Activated CD4-positive, alpha-beta T cell treated with anti-CD3 and anti-CD28 coated beads for 36 hours (primary cell): ENCODE measurements at regions of chr21 and their contacts with region 1.

Region 1: DNA sequence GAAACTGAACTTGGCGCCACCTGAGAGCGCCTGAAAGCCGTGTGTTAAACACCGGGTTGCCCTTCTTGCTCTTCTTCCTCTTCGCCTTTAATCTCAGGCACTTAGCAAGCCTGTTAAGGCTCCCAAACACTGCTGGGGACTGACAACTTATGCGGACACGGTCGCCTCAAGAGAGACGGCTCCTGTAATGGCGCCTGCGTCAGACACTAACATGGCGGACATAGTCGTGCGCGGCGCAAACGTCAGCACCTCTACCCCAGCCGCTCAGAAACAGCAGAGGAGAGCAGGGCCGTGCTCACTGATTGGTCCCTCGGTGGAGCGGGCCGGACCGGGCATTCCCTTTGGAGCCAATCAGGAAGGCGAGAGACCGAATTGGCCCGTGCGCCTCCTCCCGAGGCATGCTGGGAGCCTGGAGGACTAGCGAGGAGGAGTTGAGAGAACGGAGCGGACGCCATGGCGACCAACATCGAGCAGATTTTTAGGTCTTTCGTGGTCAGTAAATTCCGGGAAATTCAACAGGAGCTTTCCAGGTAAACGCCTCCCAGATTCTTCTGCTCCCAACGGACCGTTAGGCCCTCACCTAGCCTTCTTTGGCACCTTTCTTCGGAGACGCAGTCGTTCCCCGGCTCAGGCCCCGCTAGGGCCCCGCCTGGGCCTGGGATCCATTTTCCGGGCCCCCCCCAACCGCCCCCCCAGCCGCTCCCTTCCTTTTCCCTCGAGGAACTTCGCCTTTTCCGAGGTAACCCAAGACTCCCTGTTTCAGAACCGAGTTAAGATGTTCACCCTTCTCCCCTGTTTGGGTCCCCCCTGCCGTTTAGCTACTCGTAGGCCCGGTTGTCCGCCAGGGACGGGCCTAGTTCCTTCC is at the start of gene SON:
- DNase-seq: peak; percentile 99
- ATAC-seq: peak; percentile 94
- H3K4me3 Mint-ChIP-seq: peak within 1 kb of the TSS; percentile 85
- H3K27ac Mint-ChIP-seq: peak within 1 kb of the TSS; percentile 98
- H3K4me1 Mint-ChIP-seq: peaks cover 29% of the 10 kb centered on the region
- H3K27me3 Mint-ChIP-seq: no peaks in the 10 kb centered on the region
- total RNA-seq, gene SON: 299 to 380 TPM

Region 2: DNA sequence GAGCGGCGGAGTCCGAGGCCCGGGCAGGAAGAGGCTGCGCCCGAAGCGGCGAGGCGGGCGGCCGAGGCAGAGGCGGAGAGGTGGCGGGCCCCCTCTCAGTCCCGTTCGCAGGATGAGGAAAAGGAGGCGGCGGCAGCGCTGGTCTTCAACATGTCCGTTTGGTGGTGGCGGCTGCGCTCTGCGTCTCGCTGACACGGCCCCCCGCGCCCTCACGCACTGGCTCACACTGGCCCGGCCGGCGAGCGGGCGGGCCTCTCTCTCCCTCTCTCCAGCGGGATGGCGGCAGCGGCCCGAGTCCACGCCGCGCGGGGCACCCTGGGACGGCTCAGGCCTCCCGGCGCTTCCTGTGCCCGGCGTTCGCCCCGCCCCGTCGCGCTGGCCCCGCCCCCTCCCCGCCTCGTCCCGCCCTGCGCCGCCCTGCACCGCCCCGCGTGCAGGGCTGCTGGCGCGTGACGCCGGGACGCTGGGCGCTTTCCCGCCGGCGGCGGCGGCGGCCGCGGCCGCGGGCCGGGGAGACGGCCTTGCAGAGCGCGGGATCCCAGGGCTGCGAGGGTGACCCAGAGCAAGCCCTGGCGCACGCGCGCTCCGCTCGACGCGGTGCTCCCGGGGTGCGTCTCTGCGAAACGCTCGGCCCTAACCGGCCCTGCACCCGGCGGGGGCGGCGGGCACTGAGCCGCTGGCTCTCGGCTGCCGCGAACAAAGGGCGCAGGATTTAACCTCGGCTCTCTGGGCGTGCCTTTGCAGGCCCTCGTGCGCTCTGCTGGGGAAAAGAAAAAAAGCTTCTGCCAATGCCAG is 1810.9 kb before region 1 on chr21 and contains the start of gene SCAF4:
- CTCF ChIA-PET with region 1: no interaction called
- POLR2A ChIA-PET with region 1: no interaction called
- intact Hi-C with region 1: loop called in 1 of 2 experiments (anchors 5 kb)
- DNase-seq: peak; percentile 90
- ATAC-seq: peak; percentile 88
- H3K4me3 Mint-ChIP-seq: no peak within 1 kb of the TSS
- H3K27ac Mint-ChIP-seq: peak within 1 kb of the TSS; percentile 78
- H3K4me1 Mint-ChIP-seq: peaks cover 11% of the 10 kb centered on the region
- H3K27me3 Mint-ChIP-seq: no peaks in the 10 kb centered on the region
- total RNA-seq, gene SCAF4: 47.1 to 62.8 TPM

Region 3: GRCh38 chr21:32727687-32728455 is 815.0 kb before region 1 on chr21 and contains the start of gene SYNJ1:
- CTCF ChIA-PET with region 1: no interaction called
- POLR2A ChIA-PET with region 1: no interaction called
- intact Hi-C with region 1: loop called in 1 of 2 experiments (anchors 2 kb)
- DNase-seq: peak; percentile 97
- ATAC-seq: peak; percentile 91
- H3K4me3 Mint-ChIP-seq: peak within 1 kb of the TSS; percentile 93
- H3K27ac Mint-ChIP-seq: peak within 1 kb of the TSS; percentile 91
- H3K4me1 Mint-ChIP-seq: peaks cover 54% of the 10 kb centered on the region
- H3K27me3 Mint-ChIP-seq: no peaks in the 10 kb centered on the region
- total RNA-seq, gene SYNJ1: 6.3 to 10.5 TPM

Region 4: GRCh38 chr21:33229784-33230544 is 312.9 kb before region 1 on chr21 and contains the start of gene IFNAR2:
- CTCF ChIA-PET with region 1: no interaction called
- POLR2A ChIA-PET with region 1: no interaction called
- intact Hi-C with region 1: loop called (anchors 1 to 5 kb)
- DNase-seq: peak; percentile 85
- ATAC-seq: peak; percentile 55
- H3K4me3 Mint-ChIP-seq: peak within 1 kb of the TSS; percentile 84
- H3K27ac Mint-ChIP-seq: peak within 1 kb of the TSS; percentile 91
- H3K4me1 Mint-ChIP-seq: peaks cover 54% of the 10 kb centered on the region
- H3K27me3 Mint-ChIP-seq: no peaks in the 10 kb centered on the region
- total RNA-seq, gene IFNAR2: 26.6 to 29.8 TPM

Region 5: DNA sequence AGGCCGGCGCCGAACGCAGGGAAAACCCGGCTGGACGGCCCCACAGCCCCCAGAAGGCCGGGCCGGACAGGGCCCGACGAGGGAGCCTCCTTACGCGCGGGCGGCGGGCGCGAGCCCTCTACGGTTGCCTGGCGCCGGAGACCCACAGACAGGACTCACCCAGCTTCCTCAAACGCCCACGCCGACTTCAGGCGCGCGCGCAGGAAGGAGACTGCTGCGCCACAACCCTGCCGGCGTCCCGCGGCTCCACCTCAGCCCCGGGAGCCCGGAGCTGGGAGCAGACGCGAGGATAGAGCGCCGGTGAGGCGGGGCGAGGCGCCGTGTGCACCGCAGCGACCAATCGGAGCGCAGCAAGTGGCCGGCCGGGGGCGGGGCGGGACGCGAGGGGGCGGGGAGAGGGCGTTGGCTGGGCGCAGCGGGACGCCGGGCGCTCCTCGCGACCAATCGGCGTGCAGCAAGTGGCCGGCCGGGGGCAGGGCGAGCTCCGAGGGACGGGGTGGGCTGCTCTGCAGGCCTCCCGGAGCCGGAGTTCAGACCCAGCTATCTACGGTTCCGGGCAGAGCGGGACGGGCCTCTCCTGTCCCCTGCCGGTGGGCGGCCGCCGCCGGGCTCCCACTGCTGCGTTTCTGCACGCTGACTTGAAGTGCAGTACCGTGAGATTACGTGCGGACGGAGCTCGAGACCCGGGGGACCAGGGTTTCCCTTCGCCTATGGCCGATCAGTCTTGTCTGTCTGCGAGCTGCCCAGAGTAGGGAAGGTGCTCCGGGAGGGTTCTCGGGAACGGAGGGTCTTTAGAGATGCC is 63.0 kb before region 1 on chr21 and contains the start of gene TMEM50B:
- CTCF ChIA-PET with region 1: interaction called, 4 read pairs
- POLR2A ChIA-PET with region 1: interaction called, 4 read pairs
- intact Hi-C with region 1: loop called (anchors 1 to 2 kb)
- DNase-seq: peak; percentile 99
- ATAC-seq: peak; percentile 97
- H3K4me3 Mint-ChIP-seq: peak within 1 kb of the TSS; percentile 83
- H3K27ac Mint-ChIP-seq: peak within 1 kb of the TSS; percentile 88
- H3K4me1 Mint-ChIP-seq: peaks cover 17% of the 10 kb centered on the region
- H3K27me3 Mint-ChIP-seq: no peaks in the 10 kb centered on the region
- total RNA-seq, gene TMEM50B: 13.6 to 15.2 TPM

Region 6: DNA sequence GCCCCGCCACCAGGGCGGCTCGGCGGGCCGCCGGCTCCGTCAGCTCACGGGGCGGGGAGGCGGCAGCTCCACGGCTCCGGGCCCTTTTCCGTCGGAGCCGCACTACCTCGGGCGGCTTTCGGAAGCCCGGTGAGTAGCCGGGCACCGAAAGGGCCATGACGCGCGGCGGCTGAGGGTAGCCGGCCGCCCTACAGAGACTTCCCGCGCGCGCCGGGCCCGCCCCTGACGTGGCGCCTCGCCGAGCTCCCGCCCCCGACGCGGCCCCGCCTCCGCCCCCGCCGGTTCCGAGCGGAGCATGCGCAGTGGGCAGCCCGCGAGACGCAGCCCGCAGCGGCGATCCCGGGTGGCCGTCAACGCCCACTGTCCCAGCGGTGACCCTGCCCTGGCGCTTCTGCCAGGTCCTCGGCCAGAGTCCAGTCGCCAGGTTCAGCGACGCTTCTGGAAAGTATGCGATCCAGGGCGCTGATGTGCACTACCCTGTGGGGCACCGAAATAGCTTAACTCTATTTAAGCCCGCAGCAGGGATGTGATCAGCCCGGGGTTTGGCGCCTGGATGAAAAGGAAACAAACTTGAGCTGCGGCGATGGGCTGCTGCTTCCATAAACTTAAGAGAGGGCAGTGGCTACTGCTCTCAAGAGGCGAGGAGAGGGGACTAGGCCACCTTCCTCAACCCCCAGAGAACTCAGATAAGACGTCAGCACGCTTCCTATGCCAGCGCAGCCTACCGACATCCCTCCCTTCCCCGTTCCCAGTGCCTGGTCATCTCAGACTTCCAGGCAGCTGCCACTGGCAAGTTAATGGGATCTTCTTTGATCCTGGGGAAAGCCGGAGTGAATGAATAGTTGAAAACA is 45.8 kb after region 1 on chr21 and contains the start of gene DONSON:
- CTCF ChIA-PET with region 1: interaction called, 4 read pairs
- POLR2A ChIA-PET with region 1: no interaction called
- intact Hi-C with region 1: loop called (anchors 1 kb)
- DNase-seq: peak; percentile 93
- ATAC-seq: peak; percentile 92
- H3K4me3 Mint-ChIP-seq: peak within 1 kb of the TSS; percentile 91
- H3K27ac Mint-ChIP-seq: peak within 1 kb of the TSS; percentile 87
- H3K4me1 Mint-ChIP-seq: peaks cover 19% of the 10 kb centered on the region
- H3K27me3 Mint-ChIP-seq: no peaks in the 10 kb centered on the region
- total RNA-seq, gene DONSON: 39.5 to 41.8 TPM

Region 7: DNA sequence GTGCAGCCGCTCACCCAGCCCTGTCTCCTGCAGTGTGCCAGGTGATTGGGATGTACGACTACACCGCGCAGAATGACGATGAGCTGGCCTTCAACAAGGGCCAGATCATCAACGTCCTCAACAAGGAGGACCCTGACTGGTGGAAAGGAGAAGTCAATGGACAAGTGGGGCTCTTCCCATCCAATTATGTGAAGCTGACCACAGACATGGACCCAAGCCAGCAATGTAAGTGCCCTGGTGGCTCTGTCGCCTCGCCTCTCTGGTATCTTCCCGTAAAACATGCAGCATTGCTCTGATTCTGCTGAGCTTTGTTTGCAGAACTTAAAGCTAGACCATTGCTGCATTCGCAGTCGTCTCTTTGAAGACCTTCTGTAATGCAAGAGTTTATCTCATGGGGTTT is 293.5 kb after region 1 on chr21:
- CTCF ChIA-PET with region 1: no interaction called
- POLR2A ChIA-PET with region 1: no interaction called
- intact Hi-C with region 1: no loop called
- DNase-seq: no peak
- ATAC-seq: no peak
- H3K4me3 Mint-ChIP-seq: no peak overlapping the region
- H3K27ac Mint-ChIP-seq: no peak overlapping the region
- H3K4me1 Mint-ChIP-seq: no peaks in the 10 kb centered on the region
- H3K27me3 Mint-ChIP-seq: no peaks in the 10 kb centered on the region

Region 8: DNA sequence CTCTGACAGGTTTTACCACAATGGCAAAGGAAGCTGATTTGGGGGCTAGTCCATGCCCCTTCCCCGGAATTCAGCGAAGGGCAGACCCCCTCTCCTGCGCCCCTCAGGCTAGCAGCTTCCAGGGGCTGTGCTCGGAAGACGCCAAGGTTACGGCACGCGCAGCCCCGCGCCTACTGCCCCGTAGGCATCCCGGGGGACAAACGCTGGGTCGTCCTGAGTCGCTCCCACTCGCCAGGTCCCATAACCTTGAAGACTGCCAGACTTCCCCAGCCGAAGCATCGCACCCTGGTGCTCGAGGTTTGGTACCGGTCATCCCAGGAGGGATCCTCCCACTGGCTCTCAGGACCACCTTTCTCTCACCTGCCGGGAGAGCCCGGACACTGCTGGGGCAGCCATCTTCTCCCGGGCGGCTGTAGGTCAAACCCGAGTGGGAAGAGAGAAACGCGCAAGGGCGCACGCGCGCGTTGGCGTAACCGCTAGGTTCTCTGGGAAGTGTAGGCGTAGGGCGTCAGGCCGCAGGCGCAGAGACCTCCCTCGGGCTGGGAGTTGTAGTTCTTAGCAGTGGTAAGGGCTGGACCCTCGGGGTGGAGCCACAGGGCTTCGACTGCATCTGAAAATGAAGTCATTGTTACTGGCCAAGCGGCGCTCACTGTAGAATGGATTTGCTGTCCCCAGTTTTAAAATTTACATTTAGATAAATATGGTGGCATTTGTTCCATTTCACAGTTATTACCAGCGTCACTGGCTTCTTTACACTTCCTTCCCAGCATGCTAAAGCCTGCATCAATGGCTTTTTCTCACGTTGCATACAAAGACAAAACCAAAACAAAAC is 372.7 kb after region 1 on chr21 and contains the start of gene ATP5PO:
- CTCF ChIA-PET with region 1: no interaction called
- POLR2A ChIA-PET with region 1: no interaction called
- intact Hi-C with region 1: loop called in 1 of 2 experiments (anchors 5 kb)
- DNase-seq: peak; percentile 98
- ATAC-seq: peak; percentile 99
- H3K4me3 Mint-ChIP-seq: peak within 1 kb of the TSS; percentile 89
- H3K27ac Mint-ChIP-seq: peak within 1 kb of the TSS; percentile 97
- H3K4me1 Mint-ChIP-seq: peaks cover 27% of the 10 kb centered on the region
- H3K27me3 Mint-ChIP-seq: no peaks in the 10 kb centered on the region
- total RNA-seq, gene ATP5PO: 177 to 238 TPM